H1 (cell line): ENCODE measurements at regions of chr9 and their contacts with region 1.

Region 1: DNA sequence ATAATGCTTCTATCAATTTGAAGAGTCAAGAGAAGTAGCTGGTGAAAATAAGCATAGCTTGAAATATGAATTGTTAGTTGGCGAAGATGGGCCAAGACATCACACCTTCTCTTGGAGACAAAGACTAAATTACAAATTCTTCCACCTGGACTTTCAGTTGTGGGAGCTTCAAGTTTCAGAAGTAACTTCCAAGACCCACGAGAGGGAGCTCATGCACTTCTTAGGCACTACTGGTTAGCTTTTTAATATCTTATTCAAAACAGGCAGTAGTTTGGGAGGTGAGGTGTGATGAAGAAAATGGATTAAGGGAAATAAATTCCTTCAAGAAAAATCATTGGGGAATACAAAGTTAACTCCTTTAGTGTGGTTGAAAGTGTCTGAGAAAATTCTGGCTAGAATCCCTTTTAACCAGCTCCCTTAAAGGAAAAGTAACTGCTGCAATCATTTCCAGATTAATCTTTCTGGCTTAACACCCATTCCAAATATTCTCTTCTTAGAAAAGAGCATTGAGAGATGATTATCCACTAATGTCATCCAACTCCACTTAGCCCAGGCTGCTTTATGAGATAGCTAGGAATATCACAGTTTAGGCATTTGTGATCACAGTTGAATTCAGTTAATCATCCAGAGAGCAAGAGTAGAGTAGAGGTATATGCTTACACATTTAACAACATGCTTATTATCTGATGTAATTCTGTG is 139.5 kb upstream of the DMRTA1 start:
- DNase-seq: no peak
- H3K4me3 ChIP-seq: no peak overlapping the region
- H3K27ac ChIP-seq: no peak overlapping the region
- H3K4me1 ChIP-seq: no peaks in the 10 kb centered on the region
- H3K27me3 ChIP-seq: no peaks in the 10 kb centered on the region
- CTCF ChIP-seq: peak in 2 of 3 experiments; percentile 60 to 79; a peak in 3 of 4 replicates
- EP300 ChIP-seq: no peak
- POLR2A ChIP-seq: no peak
- RAD21 ChIP-seq: peak; percentile 92 to 95

Region 2: GRCh38 chr9:22446950-22447617 is 139.9 kb after region 1 on chr9:
- CTCF ChIA-PET with region 1: interaction called, 80 read pairs
- POLR2A ChIA-PET with region 1: interaction called, 3 read pairs
- DNase-seq: peak; percentile 46 to 86
- H3K4me3 ChIP-seq: peak overlapping the region; percentile 60 to 89 (median 80)
- H3K27ac ChIP-seq: peak overlapping the region; percentile 42; the same call in 1 of the 2 replicates
- H3K4me1 ChIP-seq: peaks cover 0 to 4% (median 1%) of the 10 kb centered on the region in 4 experiments; a peak in 1 of 7 replicates
- H3K27me3 ChIP-seq: peaks cover 0 to 3% (median 0%) of the 10 kb centered on the region in 4 experiments; a peak in 3 of 7 replicates
- CTCF ChIP-seq: peak in 1 of 3 experiments; percentile 36; a peak in 1 of 4 replicates
- EP300 ChIP-seq: no peak
- POLR2A ChIP-seq: peak in 1 of 2 experiments; percentile 51; a peak in 1 of 3 replicates
- RAD21 ChIP-seq: peak in 1 of 2 experiments; percentile 19; a peak in 2 of 4 replicates

Region 3: GRCh38 chr9:22452415-22453010 is 145.4 kb after region 1 on chr9:
- CTCF ChIA-PET with region 1: interaction called, 80 read pairs
- POLR2A ChIA-PET with region 1: interaction called, 3 read pairs
- DNase-seq: no peak
- H3K4me3 ChIP-seq: no peak overlapping the region
- H3K27ac ChIP-seq: no peak overlapping the region
- H3K4me1 ChIP-seq: peaks cover 0 to 4% (median 1%) of the 10 kb centered on the region in 4 experiments; a peak in 1 of 7 replicates
- H3K27me3 ChIP-seq: peaks cover 0 to 3% (median 0%) of the 10 kb centered on the region in 4 experiments; a peak in 2 of 7 replicates
- CTCF ChIP-seq: peak in 2 of 3 experiments; percentile 57 to 58; a peak in 2 of 4 replicates
- EP300 ChIP-seq: no peak
- POLR2A ChIP-seq: no peak
- RAD21 ChIP-seq: peak; percentile 72 to 77